ENCODE measurements at regions of chr11 and their contacts with region 1.

Region 1: DNA sequence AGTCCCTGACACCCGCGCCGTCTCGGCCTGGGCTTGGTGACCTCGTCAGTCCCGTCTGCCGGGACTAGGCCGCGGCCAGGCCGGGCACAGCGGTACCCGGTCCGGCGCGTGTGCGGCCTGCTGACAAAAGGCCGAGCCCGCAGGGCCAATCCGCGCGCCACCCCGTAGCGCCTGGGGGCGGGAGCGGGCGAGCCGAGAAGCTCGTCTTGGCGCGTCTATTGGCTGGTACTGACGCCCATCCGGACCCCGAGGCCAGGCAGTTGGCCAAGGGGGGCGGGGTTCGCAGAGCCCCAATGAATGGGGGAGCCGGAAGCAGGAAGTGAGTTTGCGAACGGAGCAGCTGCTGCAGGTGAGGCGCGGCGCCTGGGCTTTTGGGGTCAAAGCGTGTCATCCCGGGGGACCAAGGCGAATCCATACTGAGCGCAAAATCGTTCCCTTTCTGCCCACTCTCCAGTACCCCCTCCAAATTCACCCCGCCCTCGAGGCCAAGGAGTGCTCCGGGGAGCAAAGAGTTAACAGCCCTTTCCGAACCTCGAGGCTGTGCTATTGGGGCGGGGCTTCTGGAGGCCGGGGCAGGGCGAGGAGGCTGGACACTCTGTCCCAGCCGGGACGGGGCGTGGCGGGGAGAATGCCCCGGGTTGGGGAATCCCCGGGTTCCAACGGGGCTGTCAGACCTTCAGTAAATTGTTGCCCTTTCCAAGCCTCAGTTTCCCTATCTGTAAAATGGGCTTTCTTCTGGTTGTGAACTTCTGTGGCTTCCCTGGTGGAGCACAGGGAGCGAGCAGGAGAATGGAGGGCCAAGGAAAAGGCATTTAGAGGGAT is at the start of gene DPP3:
- DNase-seq: peak; percentile 97
- H3K4me3 Mint-ChIP-seq: peak within 1 kb of the TSS; percentile 78
- H3K27ac Mint-ChIP-seq: peak within 1 kb of the TSS; percentile 86
- H3K4me1 Mint-ChIP-seq: peaks cover 27% of the 10 kb centered on the region
- H3K27me3 Mint-ChIP-seq: no peaks in the 10 kb centered on the region
- total RNA-seq, gene DPP3: 59.3 to 60.6 TPM

Region 2: DNA sequence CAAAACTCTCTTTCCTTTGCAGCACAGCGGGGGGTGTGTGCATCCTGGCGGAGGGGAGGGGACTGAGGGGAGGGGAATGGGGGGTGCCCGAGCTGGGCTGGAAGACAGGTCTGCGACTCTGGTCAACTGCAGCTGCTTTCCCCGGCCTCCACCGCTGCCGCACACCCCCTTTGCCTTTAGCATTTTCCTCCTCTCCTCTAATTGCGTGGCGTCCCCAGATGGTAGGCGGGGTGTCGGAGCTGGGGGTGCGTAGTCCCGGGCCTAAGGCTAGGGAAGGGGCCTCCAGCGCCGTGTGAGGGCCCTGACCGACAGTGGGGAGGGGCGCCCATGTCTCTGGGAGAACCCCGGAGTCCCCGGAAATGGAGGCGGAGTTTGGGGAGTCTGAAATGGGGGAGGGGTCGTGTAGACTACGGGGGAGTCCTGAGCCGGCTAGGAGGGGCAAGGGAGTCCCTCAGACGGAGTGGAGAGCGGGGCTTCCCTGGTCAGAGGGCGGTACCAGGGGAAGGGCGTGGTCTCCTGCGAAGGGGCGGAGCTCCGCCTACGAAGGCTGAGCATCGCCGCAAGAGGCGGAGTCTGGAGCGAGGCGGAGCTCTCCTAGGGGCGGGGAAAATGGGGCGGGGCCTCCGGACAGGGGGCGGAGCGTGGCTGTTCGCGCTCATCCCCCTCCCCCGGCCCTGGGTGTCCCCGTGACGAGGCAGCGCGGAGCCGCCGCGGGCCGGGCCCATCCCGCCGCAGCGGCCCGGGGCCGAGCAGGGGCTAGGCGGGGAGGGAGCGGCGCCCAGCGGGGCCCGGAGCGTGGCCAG is 13.9 kb before region 1 on chr11 and contains the start of gene PELI3:
- CTCF ChIA-PET with region 1: interaction called, 37 read pairs
- POLR2A ChIA-PET with region 1: interaction called, 28 read pairs
- DNase-seq: peak; percentile 94
- H3K4me3 Mint-ChIP-seq: peak within 1 kb of the TSS; percentile 87
- H3K27ac Mint-ChIP-seq: peak within 1 kb of the TSS; percentile 36
- H3K4me1 Mint-ChIP-seq: peaks cover 36% of the 10 kb centered on the region
- H3K27me3 Mint-ChIP-seq: no peaks in the 10 kb centered on the region
- total RNA-seq, gene PELI3: 6.8 to 7.5 TPM

Region 3: DNA sequence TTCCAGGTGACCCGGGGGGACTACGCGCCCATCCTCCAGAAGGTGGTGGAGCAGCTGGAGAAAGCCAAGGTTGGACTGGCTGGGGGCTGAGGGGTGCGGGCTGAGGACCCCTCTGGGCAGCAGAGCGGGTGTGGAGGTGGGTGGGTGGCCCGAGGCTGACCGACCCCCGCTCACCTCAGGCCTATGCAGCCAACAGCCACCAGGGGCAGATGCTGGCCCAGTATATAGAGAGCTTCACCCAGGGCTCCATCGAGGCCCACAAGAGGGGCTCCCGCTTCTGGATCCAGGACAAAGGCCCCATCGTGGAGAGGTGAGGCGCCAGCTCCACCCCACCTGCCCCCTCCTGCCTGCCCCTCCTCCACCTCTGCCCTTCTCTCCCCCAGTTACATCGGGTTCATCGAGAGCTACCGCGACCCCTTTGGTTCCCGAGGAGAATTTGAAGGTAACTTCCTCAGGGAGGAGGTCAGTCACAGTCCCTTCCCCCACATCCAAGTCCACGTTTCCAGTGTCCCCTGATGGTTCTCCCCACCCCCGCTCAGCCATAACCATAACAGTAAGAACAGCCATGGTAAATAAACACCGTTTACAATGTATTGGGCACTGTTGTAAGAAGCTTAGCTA is 11.1 kb after region 1 on chr11:
- CTCF ChIA-PET with region 1: interaction called, 10 read pairs
- POLR2A ChIA-PET with region 1: interaction called, 4 read pairs
- DNase-seq: no peak
- H3K4me3 Mint-ChIP-seq: no peak overlapping the region
- H3K27ac Mint-ChIP-seq: no peak overlapping the region
- H3K4me1 Mint-ChIP-seq: no peaks in the 10 kb centered on the region
- H3K27me3 Mint-ChIP-seq: no peaks in the 10 kb centered on the region